MCF 10A (cell line): ENCODE measurements at regions of chr19 and their contacts with region 1.

Region 1: GRCh38 chr19:35648017-35648961 is at the start of gene COX6B1:
- DNase-seq: peak; percentile 99
- H3K4me3 Mint-ChIP-seq: peak within 1 kb of the TSS; percentile 99
- H3K27ac Mint-ChIP-seq: peak within 1 kb of the TSS; percentile 98
- H3K4me1 Mint-ChIP-seq: peaks cover 13% of the 10 kb centered on the region
- H3K27me3 Mint-ChIP-seq: no peaks in the 10 kb centered on the region
- CTCF ChIP-seq: no peak
- total RNA-seq, gene COX6B1: 213 and 265 TPM in 2 replicates

Region 2: DNA sequence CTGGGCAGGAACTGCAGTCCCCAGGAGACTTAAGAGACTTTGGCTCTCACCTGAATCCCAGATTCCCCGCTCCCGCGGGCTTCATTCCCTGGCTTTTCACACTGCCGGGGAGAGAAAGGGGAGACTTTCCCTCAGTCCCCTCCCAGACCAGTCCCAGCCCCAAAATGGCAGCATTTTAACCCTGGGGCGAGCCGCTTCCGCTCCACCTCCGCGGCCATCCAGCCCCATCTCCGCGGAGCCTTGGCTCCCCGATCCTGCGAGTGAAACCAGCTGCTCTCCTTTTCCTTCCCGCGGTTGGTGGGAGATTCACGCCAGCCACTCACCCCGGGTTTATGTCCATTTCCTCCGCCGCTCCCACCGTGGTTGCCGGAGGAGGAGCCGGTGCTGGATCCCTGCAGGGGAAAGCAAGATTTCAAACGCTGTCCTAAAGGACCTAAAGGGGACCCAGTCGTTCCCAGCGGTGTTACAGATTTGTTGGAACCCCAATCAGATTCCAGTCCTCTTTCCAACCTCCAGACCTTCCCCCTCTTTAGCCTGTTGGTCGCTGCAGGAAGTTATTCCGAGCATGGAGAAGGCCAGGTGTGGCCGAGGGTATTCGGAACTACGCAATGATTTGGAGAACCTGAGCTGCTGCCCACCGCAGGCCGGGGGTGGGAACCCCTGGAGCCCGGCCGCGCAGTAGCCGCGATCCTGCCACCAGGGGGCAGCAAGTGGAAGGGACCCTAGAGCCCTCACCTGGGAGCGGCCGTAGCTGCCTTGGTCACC is 138.2 kb before region 1 on chr19:
- CTCF ChIA-PET with region 1: interaction called, 3 read pairs
- POLR2A ChIA-PET with region 1: interaction called, 4 read pairs
- intact Hi-C with region 1: loop called (anchors 2 kb)
- DNase-seq: peak; percentile 88
- H3K4me3 Mint-ChIP-seq: peak overlapping the region; percentile 74
- H3K27ac Mint-ChIP-seq: peak overlapping the region; percentile 75
- H3K4me1 Mint-ChIP-seq: peaks cover 15% of the 10 kb centered on the region
- H3K27me3 Mint-ChIP-seq: no peaks in the 10 kb centered on the region
- CTCF ChIP-seq: peak; percentile 93

Region 3: DNA sequence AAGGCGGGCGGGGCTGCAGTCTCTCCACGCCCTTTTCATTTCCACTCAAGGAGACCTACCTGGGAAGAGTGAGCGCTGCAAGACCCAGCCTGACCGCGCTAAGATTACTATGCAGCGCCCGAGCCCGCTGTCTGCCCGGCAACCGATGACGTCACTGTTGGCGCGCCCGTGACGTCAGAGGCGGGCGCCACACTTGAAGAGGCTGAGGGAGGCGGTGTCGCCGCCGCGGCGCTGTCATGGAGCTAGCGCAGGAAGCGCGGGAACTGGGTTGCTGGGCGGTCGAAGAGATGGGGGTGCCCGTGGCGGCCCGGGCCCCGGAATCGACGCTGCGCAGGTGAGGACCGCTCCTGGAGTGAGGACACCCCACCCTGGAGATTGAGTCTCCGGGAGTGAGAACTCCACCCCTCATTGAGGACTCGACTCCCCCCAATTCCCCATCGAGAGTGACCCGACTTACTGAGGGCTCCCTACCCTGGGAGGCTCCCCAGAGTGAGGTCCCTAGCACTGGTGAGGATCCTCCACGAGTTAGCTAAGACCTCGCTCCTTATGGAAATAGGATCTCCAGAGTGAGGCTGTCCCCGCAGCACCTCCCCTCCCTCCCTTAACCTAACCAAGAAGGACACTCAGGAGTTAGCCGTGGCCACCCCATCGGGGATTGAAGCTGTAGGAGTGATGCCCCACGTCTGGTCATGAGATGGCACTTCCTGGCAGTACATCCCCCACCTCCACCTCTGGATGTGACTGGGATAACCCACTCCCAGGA is 35.5 kb before region 1 on chr19 and contains the start of gene HAUS5:
- CTCF ChIA-PET with region 1: interaction called, 3 read pairs
- POLR2A ChIA-PET with region 1: interaction called, 12 read pairs
- intact Hi-C with region 1: no loop called
- DNase-seq: peak; percentile 92
- H3K4me3 Mint-ChIP-seq: peak within 1 kb of the TSS; percentile 82
- H3K27ac Mint-ChIP-seq: peak within 1 kb of the TSS; percentile 81
- H3K4me1 Mint-ChIP-seq: no peaks in the 10 kb centered on the region
- H3K27me3 Mint-ChIP-seq: no peaks in the 10 kb centered on the region
- CTCF ChIP-seq: no peak
- total RNA-seq, gene HAUS5: 6.3 and 10.6 TPM in 2 replicates

Region 4: GRCh38 chr19:35628565-35629331 is 19.5 kb before region 1 on chr19 and contains the start of gene RBM42:
- CTCF ChIA-PET with region 1: no interaction called
- POLR2A ChIA-PET with region 1: interaction called, 24 read pairs
- intact Hi-C with region 1: loop called (anchors 2 kb)
- DNase-seq: peak; percentile 100
- H3K4me3 Mint-ChIP-seq: peak within 1 kb of the TSS; percentile 87
- H3K27ac Mint-ChIP-seq: peak within 1 kb of the TSS; percentile 97
- H3K4me1 Mint-ChIP-seq: peaks cover 10% of the 10 kb centered on the region
- H3K27me3 Mint-ChIP-seq: no peaks in the 10 kb centered on the region
- CTCF ChIP-seq: no peak
- total RNA-seq, gene RBM42: 84.2 and 87.7 TPM in 2 replicates

Region 5: GRCh38 chr19:35702223-35703012 is 54.1 kb after region 1 on chr19:
- CTCF ChIA-PET with region 1: interaction called, 3 read pairs
- POLR2A ChIA-PET with region 1: interaction called, 10 read pairs
- intact Hi-C with region 1: no loop called
- DNase-seq: peak; percentile 98
- H3K4me3 Mint-ChIP-seq: peak overlapping the region; percentile 79
- H3K27ac Mint-ChIP-seq: peak overlapping the region; percentile 37
- H3K4me1 Mint-ChIP-seq: peaks cover 5% of the 10 kb centered on the region
- H3K27me3 Mint-ChIP-seq: no peaks in the 10 kb centered on the region
- CTCF ChIP-seq: no peak

Region 6: DNA sequence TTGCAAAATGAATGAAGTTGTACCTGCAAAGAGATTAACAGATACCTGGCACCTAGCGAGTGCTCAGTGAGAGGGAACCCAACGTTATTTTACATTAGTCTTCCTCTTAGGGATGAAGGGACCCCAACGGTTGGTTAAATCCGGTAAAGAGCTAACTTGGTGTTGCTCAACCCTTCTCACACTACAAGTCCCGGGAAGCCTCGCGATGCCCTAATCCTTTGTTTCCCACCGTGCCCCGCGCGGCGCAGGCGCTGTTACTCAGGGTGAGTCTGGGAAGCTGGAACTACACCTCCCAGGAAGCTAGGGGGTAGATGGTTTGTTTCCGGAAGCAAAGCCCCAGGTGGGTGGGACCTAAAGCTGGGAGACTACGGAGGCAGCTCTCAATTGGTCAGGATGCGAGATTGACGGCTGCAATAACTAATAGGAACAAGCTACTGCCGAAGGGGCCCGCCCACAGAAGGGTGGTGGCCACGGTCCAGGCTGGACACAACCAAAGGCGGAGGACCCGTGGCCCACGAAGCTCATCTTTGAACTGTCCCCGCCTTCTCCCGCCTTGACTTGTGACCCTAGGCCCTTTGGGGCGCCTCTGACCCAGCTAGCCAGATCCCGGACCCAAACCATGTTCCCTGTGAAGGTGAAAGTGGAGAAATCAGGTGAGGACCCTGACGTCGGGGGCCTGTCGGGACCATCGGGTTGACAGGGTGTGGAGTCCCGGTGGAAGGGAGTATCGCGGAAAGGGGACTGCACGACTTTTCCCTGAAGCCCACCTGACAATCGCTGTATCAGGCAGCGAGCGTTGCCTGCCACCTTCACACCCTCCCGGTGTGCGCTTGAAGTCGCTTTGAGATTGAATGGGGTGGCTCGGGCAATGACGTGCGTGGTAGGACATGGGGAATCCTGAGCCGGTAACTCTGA is 100.1 kb after region 1 on chr19 and contains the start of gene LIN37:
- CTCF ChIA-PET with region 1: no interaction called
- POLR2A ChIA-PET with region 1: interaction called, 12 read pairs
- intact Hi-C with region 1: no loop called
- DNase-seq: peak; percentile 100
- H3K4me3 Mint-ChIP-seq: peak within 1 kb of the TSS; percentile 94
- H3K27ac Mint-ChIP-seq: peak within 1 kb of the TSS; percentile 87
- H3K4me1 Mint-ChIP-seq: peaks cover 27% of the 10 kb centered on the region
- H3K27me3 Mint-ChIP-seq: no peaks in the 10 kb centered on the region
- CTCF ChIP-seq: no peak
- total RNA-seq, gene LIN37: 19.6 and 24.6 TPM in 2 replicates